ENCODE measurements at regions of chr11 and their contacts with region 1.

Region 1: GRCh38 chr11:36347384-36347906 is 51.4 kb downstream of the PRR5L start:
- DNase-seq: no peak
- H3K4me3 Mint-ChIP-seq: no peak overlapping the region
- H3K27ac Mint-ChIP-seq: peak overlapping the region; percentile 73
- H3K4me1 Mint-ChIP-seq: peaks cover 48% of the 10 kb centered on the region
- H3K27me3 Mint-ChIP-seq: peaks cover 18% of the 10 kb centered on the region

Region 2: DNA sequence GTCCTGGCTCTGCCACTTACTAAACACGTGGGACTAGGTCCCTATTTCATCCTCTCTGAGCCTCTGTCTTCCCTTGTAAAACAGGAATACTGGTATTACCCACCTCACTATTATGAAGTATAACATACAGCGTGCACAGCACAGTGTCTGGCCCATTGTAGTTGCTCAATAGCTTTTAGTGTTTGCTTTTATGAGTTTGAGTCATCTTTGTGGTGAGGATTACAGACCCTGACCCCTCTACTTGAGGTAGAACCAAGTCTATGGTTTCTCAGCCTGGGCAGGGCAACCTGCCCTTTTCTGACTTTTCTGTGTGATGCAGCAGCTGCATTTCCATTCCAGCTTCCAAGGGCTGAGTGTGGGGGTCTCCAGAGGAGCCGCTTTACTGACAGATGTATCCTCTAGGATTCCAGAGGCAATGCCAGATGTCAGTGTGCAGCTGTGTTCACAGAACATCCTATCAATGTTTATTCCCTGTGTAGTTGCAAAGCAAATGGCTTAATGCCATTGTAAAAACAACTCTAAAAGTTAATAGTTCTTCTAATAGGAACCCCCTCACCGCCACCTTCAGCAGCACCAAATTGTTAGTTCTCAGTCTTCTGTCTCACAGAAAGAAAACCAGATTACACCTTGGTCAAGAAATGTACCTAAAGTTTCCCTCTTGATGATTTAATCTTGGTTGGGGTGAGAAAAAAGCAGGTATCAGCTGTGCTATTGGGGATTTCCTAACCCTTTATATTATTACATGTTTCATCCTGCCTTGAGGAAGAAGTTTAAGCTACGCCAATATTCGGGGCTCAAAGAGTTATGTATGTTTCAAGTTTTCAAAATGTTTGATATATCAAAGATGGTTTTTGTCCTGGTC is 34.6 kb before region 1 on chr11:
- CTCF ChIA-PET with region 1: no interaction called
- intact Hi-C with region 1: loop called (anchors 1 kb)
- DNase-seq: no peak
- H3K4me3 Mint-ChIP-seq: no peak overlapping the region
- H3K27ac Mint-ChIP-seq: no peak overlapping the region
- H3K4me1 Mint-ChIP-seq: peaks cover 11% of the 10 kb centered on the region
- H3K27me3 Mint-ChIP-seq: peaks cover 27% of the 10 kb centered on the region

Region 3: DNA sequence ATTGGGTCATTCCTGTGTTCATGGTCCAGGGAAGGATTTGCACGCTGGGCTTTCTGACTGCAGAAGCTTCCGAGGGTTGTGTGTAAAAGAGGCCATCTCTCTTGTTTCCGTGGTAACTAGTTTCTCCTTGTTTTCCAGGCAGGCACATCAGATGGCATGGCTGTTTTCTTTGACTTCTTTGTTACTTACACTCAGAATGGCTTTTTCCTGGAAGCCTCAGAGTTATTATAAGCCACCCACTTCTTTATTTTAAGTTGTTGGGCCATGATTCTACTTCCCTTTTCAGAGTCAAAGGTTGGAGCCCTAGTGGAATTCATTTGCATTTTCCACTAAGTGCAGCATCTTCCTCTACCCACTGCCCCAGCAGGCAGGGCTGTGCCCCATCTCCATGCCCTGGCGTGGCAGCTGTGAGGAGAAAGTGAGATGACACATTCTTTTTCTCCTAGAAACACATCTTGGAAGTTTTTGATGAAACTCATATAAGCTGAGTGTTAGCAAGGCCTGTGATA is 43.6 kb after region 1 on chr11:
- CTCF ChIA-PET with region 1: no interaction called
- intact Hi-C with region 1: loop called (anchors 2 kb)
- DNase-seq: peak; percentile 21
- H3K4me3 Mint-ChIP-seq: no peak overlapping the region
- H3K27ac Mint-ChIP-seq: peak overlapping the region; percentile 72
- H3K4me1 Mint-ChIP-seq: peaks cover 47% of the 10 kb centered on the region
- H3K27me3 Mint-ChIP-seq: peaks cover 6% of the 10 kb centered on the region